PC-9 (cell line): ENCODE measurements at regions of chr1 and their contacts with region 1.

Region 1: GRCh38 chr1:235169986-235170385 is 8.9 kb upstream of the RBM34 start:
- DNase-seq: peak in 1 of 2 experiments; percentile 72
- H3K4me3 ChIP-seq: no peak overlapping the region
- H3K27ac ChIP-seq: no peak overlapping the region
- H3K4me1 ChIP-seq: no peaks in the 10 kb centered on the region
- H3K27me3 ChIP-seq: no peaks in the 10 kb centered on the region
- CTCF ChIP-seq: no peak

Region 2: DNA sequence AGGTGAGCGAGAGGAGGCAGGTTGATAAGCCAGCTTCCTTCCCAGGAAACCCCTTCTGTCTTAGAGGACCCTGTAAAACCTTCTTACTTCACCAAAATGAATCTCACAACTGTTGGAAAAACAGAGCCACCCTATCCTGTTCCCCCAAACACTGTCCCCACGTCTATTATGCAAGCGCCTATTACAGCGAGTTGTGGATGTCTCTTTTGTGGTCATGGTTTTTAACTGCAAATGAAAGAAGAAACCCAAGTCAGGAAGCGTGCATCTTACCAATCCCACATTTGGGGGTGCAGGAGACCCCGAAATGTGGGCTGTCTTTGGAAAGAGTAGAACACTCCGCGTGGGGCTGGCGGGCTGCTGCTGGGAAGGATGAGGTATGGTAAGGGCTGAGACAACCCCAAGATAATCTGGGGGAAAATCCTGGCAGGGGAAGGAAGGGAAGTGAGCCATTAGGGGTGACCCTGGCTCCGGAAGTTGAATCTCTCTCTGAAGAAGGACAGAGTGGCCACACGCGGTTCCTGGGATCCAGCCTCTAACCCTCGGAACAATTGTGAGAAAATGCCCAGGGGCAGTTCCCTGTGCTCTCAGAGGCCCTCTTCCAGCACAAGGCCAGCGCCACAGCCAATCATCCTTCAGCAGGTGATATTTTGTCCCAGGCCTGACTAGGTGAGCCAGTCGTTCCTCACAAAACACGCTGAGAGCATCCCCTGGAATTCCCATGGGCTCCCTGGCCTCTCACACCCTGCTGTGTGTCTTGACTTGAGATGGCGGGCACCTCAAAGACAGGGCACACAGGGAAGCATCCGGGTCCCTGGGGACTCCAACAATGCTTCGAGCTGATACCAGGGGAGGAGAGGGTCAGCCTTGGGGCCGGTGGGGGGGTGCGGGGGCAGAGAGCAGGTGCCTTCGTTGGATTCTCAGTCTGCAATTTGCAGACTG is 391.5 kb before region 1 on chr1:
- CTCF ChIA-PET with region 1: no interaction called
- POLR2A ChIA-PET with region 1: no interaction called
- intact Hi-C with region 1: no loop called
- DNase-seq: no peak
- H3K4me3 ChIP-seq: no peak overlapping the region
- H3K27ac ChIP-seq: no peak overlapping the region
- H3K4me1 ChIP-seq: no peaks in the 10 kb centered on the region
- H3K27me3 ChIP-seq: no peaks in the 10 kb centered on the region
- CTCF ChIP-seq: no peak

Region 3: DNA sequence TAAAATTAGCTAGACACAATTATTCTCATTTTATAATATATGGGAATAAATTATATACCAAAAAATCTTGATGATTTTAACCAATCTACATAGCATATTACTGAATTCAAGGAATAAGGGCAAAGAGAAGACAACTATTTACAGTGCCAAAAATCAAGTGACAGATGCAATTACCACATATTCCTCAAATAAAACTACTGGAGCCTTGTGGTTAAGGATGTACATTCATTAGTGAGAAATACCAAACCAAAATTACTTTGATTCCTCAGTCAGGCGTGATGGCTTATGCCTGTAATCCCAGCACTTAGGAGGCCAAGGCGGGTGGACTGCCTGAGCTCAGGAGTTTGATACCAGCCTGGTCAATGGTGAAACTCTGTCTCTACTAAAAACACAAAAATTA is 59.9 kb after region 1 on chr1:
- CTCF ChIA-PET with region 1: no interaction called
- POLR2A ChIA-PET with region 1: interaction called, 16 read pairs
- intact Hi-C with region 1: no loop called
- DNase-seq: no peak
- H3K4me3 ChIP-seq: no peak overlapping the region
- H3K27ac ChIP-seq: no peak overlapping the region
- H3K4me1 ChIP-seq: no peaks in the 10 kb centered on the region
- H3K27me3 ChIP-seq: no peaks in the 10 kb centered on the region
- CTCF ChIP-seq: no peak

Region 4: GRCh38 chr1:235397733-235398132 is 227.7 kb after region 1 on chr1:
- CTCF ChIA-PET with region 1: no interaction called
- POLR2A ChIA-PET with region 1: no interaction called
- intact Hi-C with region 1: no loop called
- DNase-seq: peak; percentile 48 to 94
- H3K4me3 ChIP-seq: no peak overlapping the region
- H3K27ac ChIP-seq: peak overlapping the region; percentile 71
- H3K4me1 ChIP-seq: peaks cover 44% of the 10 kb centered on the region
- H3K27me3 ChIP-seq: no peaks in the 10 kb centered on the region
- CTCF ChIP-seq: no peak

Region 5: DNA sequence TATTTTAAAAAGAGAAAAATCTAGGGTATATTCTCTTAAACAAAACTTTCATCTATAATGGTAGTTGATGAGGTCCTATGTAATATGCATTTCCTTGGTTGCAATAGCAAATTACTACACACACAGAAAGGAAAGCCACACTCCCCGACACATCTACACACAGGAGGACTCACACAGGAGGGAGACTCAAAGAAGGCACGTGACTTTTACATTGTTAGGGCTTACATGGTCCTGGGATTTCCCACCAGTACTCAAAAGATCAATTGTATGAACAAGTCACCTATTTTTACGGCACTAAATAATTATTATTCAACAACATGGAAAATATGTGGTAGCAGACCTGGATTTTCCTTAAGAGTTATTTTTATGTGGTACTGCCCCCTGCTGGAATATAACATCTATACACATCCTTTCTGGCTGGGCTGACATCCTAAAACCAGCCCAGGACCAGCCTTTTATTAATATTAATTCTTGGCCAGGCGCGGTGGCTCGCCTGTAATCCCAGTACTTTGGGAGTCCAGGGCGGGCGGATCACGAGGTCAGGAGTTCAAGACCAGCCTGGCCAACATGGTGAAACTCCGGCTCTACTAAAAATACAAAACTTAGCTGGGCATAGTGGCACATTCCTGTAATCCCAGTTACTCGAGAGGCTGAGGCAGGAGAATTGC is 1319.9 kb after region 1 on chr1:
- CTCF ChIA-PET with region 1: no interaction called
- POLR2A ChIA-PET with region 1: no interaction called
- intact Hi-C with region 1: no loop called
- DNase-seq: no peak
- H3K4me3 ChIP-seq: no peak overlapping the region
- H3K27ac ChIP-seq: no peak overlapping the region
- H3K4me1 ChIP-seq: peaks cover 23% of the 10 kb centered on the region
- H3K27me3 ChIP-seq: no peaks in the 10 kb centered on the region
- CTCF ChIP-seq: peak; percentile 87